Activated CD8-positive, alpha-beta T cell treated with anti-CD3 and anti-CD28 coated beads, Interleukin-2, amount 10 ng/mL, durations not matched to agents 7 days and 5 days (primary cell): ENCODE measurements at regions of chr19 and their contacts with region 1.

Region 1: DNA sequence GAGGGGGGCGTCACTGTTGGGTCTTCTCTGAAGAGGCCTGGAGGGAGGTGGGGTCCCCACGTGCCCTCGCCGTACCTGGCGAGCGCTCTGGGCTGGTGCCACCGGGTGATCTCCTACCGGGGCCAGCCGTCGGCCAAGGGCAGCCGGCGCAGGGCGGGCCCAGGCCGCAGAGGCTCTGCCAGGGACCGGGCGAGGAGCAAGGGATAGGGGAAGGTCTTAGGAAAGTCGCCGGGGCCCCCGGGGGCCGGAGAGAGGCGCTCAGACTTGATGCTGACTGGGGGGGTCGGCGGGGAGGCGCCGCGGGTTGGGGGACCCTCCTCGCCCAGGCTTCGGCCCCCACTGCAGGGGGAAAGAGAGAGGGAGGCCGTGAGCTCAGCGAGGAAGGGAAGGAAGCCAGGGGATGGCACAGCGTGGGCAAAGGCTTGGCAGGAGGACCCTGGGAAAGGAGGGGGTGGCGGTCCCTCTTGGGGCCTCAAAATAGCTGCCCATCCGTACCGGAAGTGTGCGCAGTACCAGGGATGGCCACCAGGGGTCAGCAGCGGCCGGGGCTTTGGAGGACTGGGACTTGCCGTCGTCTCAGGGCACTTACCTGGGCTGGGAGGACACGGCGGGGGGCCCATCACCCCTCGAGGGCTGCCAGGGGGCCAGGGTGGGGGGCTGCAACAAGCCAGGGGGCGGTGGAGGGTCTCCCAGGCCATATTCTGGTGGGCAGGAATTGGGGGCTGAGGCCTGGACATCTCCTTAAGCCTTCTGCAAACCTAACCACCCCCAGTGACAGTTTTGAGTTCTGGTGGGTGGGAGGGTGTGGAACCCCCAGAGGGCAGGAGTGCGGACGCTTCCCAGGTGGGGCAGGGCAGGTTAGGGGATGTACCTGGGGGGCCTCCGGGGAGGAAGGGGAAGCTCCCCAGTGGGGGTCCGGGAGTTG is 7.7 kb upstream of the TMEM161A start:
- DNase-seq: peak; percentile 90
- ATAC-seq: peak; percentile 77
- H3K4me3 Mint-ChIP-seq: no peak overlapping the region
- H3K27ac Mint-ChIP-seq: no peak overlapping the region
- H3K4me1 Mint-ChIP-seq: no peaks in the 10 kb centered on the region
- H3K27me3 Mint-ChIP-seq: no peaks in the 10 kb centered on the region

Region 2: GRCh38 chr19:18967358-18968146 is 178.4 kb before region 1 on chr19:
- CTCF ChIA-PET with region 1: no interaction called
- POLR2A ChIA-PET with region 1: no interaction called
- DNase-seq: no peak
- ATAC-seq: no peak
- H3K4me3 Mint-ChIP-seq: no peak overlapping the region
- H3K27ac Mint-ChIP-seq: no peak overlapping the region
- H3K4me1 Mint-ChIP-seq: no peaks in the 10 kb centered on the region
- H3K27me3 Mint-ChIP-seq: peaks cover 7% of the 10 kb centered on the region

Region 3: GRCh38 chr19:19176950-19177349 is 31.0 kb after region 1 on chr19:
- CTCF ChIA-PET with region 1: interaction called, 57 read pairs
- POLR2A ChIA-PET with region 1: no interaction called
- DNase-seq: no peak
- ATAC-seq: no peak
- H3K4me3 Mint-ChIP-seq: no peak overlapping the region
- H3K27ac Mint-ChIP-seq: no peak overlapping the region
- H3K4me1 Mint-ChIP-seq: no peaks in the 10 kb centered on the region
- H3K27me3 Mint-ChIP-seq: no peaks in the 10 kb centered on the region

Region 4: DNA sequence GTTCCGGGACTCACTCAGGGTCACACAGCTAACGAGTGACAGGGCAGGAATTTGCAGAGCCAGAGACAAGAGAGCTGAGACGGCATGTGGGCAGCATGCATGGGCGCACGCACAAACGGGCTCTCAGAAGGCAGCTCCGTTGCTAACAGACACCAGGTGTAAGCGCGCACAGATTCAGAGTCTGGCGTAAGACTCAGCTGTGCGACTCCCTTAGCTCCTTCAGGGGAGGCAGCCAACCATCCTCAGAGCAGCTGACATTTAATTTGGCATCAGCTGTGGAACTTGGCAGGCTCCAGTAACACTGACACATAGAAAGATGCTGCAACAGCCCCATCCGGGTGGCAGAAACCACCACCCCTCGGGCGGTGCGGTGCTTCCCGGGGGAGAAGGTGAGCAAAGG is 134.6 kb after region 1 on chr19:
- CTCF ChIA-PET with region 1: no interaction called
- POLR2A ChIA-PET with region 1: no interaction called
- DNase-seq: no peak
- ATAC-seq: no peak
- H3K4me3 Mint-ChIP-seq: no peak overlapping the region
- H3K27ac Mint-ChIP-seq: no peak overlapping the region
- H3K4me1 Mint-ChIP-seq: no peaks in the 10 kb centered on the region
- H3K27me3 Mint-ChIP-seq: no peaks in the 10 kb centered on the region